ENCODE measurements at regions of chr5 and their contacts with region 1.

Region 1: DNA sequence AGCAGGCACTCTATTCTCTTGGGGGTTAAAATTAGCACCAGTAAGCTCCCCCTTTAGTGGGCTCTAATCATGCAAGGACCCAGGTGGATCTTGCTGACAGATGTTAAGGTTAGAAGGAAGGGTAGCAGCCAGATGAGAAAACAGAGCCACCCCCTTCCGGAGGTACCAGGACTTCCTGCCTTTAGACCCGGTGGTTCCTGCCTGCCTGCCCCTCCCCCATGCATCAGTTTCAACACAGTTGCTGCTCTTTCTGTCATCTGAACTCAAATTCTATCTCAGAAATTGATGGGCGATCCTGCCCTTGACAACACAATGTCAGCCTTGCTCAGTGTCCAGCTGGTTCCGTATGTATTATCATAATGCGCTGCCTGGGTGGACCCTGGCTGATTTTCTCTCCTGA is 287.3 kb downstream of the EBF1 start:
- DNase-seq: peak; percentile 99
- H3K4me3 ChIP-seq: peak overlapping the region; percentile 57
- H3K27ac ChIP-seq: peak overlapping the region; percentile 94
- H3K4me1 ChIP-seq: peaks cover 96% of the 10 kb centered on the region
- CTCF ChIP-seq: no peak

Region 2: DNA sequence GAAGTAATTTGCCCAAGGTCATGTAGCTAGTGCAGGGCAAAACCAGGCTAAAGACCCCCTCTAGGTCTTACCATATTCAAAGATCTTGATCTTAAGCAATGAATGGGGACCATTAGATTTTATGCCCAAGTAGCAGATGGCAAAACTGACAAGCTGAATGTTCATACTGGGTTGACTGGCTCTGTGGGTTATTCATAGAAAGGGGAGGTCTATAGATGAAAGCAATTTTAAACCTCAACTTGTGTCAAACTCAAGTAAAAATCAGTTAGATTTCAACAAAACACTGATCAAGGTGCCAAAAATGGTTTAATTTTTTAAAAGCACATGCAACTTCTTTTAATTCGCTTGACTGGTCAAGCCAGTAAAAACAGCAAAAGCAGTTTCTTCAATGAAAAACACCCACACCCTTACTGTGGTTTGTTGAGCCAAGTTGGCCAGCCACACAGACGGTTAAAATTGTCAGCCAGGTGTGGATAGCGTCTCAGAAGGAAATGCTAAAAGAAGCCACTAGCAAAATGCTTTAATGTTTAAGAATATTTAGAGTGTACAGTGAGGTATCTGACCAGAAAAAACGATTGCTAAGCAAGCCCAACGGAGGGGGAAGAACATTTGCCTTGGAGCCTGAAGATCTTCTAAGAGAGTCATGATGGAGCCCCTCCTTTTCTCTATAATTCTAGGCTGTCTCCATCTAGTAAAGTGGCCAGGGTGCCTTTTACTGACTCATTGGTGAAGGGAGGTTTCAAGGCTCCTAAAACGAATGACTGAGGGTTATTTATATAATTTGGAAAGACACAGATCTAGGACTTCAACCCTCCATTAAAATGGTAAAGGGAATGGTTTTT is 413.8 kb before region 1 on chr5:
- CTCF ChIA-PET with region 1: no interaction called
- POLR2A ChIA-PET with region 1: no interaction called
- intact Hi-C with region 1: loop called (anchors 2 kb)
- DNase-seq: peak; percentile 99
- H3K4me3 ChIP-seq: peak overlapping the region; percentile 31
- H3K27ac ChIP-seq: peak overlapping the region; percentile 95
- H3K4me1 ChIP-seq: peaks cover 54% of the 10 kb centered on the region
- CTCF ChIP-seq: no peak

Region 3: GRCh38 chr5:158725297-158725851 is 87.0 kb before region 1 on chr5:
- CTCF ChIA-PET with region 1: no interaction called
- POLR2A ChIA-PET with region 1: no interaction called
- intact Hi-C with region 1: no loop called
- DNase-seq: peak; percentile 30
- H3K4me3 ChIP-seq: no peak overlapping the region
- H3K27ac ChIP-seq: no peak overlapping the region
- H3K4me1 ChIP-seq: no peaks in the 10 kb centered on the region
- CTCF ChIP-seq: peak; percentile 46

Region 4: DNA sequence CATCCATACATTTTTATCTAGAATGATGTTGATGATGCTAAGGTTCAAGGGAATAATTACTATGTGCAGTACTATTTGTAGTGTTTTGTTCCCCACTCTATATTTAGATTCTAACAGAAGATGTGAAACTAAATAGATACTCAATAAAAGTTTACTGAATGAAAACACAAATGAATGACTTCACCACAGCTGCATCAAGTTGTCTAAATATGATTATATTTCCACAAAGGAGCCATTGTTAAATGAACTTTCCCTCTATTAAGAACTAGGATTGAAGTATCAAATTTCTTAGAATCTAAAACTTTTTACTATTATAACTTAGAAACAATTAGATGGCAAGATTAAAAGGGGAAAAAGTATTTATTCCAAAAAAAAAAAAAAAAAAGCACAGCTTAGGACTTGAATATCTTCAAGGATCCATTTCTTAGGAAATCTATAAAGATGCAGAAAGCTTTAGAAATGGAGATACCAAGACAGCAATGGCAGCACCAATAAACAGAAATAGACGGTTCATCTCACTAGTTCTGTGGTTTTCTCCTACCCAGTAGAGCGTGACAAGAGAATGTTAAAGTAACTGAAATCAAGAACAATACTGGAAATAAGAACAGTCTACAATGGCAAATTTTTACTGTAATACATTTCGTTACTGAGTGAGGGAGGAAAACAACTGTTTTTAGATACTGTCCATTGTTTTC is 60.3 kb before region 1 on chr5:
- CTCF ChIA-PET with region 1: no interaction called
- POLR2A ChIA-PET with region 1: interaction called, 12 read pairs
- intact Hi-C with region 1: loop called (anchors 2 kb)
- DNase-seq: peak; percentile 91
- H3K4me3 ChIP-seq: peak overlapping the region; percentile 57
- H3K27ac ChIP-seq: peak overlapping the region; percentile 99
- H3K4me1 ChIP-seq: peaks cover 83% of the 10 kb centered on the region
- CTCF ChIP-seq: no peak

Region 5: GRCh38 chr5:158875272-158875679 is 62.9 kb after region 1 on chr5:
- CTCF ChIA-PET with region 1: interaction called, 3 read pairs
- POLR2A ChIA-PET with region 1: interaction called, 21 read pairs
- intact Hi-C with region 1: loop called (anchors 2 kb)
- DNase-seq: peak; percentile 57
- H3K4me3 ChIP-seq: peak overlapping the region; percentile 60
- H3K27ac ChIP-seq: peak overlapping the region; percentile 92
- H3K4me1 ChIP-seq: peaks cover 74% of the 10 kb centered on the region
- CTCF ChIP-seq: no peak

Region 6: GRCh38 chr5:159049844-159050315 is 237.5 kb after region 1 on chr5:
- CTCF ChIA-PET with region 1: no interaction called
- POLR2A ChIA-PET with region 1: interaction called, 7 read pairs
- intact Hi-C with region 1: loop called (anchors 2 kb)
- DNase-seq: peak; percentile 51
- H3K4me3 ChIP-seq: peak overlapping the region; percentile 50
- H3K27ac ChIP-seq: peak overlapping the region; percentile 86
- H3K4me1 ChIP-seq: peaks cover 86% of the 10 kb centered on the region
- CTCF ChIP-seq: peak; percentile 81